HCT116 (cell line): ENCODE measurements at regions of chr17 and their contacts with region 1.

Region 1: GRCh38 chr17:30477083-30477773 is at the start of gene GOSR1:
- DNase-seq: peak; percentile 91
- ATAC-seq: peak; percentile 98
- H3K4me3 ChIP-seq: peak within 1 kb of the TSS; percentile 81 to 87
- H3K27ac ChIP-seq: peak within 1 kb of the TSS; percentile 78
- H3K4me1 ChIP-seq: peaks cover 0 to 12% of the 10 kb centered on the region in 2 experiments; a peak in 3 of 4 replicates
- H3K27me3 ChIP-seq: no peaks in the 10 kb centered on the region
- CTCF ChIP-seq: peak; percentile 68 to 76 (median 71); a peak in 5 of 6 replicates
- POLR2A ChIP-seq: peak; percentile 88
- RAD21 ChIP-seq: peak; percentile 50
- total RNA-seq, gene GOSR1: 48.8 TPM

Region 2: DNA sequence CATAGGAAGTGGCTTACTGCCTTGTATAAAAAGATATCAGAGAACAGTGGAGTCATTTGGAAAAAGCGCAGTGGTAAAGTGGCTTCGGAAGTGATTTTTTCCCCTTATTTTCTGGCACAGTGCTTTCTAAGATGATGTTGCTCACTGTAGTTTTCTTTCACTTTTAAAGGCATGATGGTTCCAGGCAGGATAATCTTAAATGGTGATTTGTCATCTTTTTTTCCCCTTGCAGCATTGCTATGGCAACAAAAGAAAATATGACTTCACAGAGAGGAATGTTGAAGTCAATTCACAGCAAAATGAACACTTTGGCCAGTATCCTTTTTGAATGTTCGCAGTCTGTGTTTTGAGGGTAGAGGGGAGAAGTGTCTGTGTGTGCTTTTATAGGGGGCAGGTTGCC is 42.5 kb after region 1 on chr17:
- CTCF ChIA-PET with region 1: no interaction called
- POLR2A ChIA-PET with region 1: no interaction called
- RAD21 ChIA-PET with region 1: no interaction called
- intact Hi-C with region 1: no loop called
- DNase-seq: no peak
- ATAC-seq: no peak
- H3K4me3 ChIP-seq: no peak overlapping the region
- H3K27ac ChIP-seq: no peak overlapping the region
- H3K4me1 ChIP-seq: no peaks in the 10 kb centered on the region
- H3K27me3 ChIP-seq: no peaks in the 10 kb centered on the region
- CTCF ChIP-seq: no peak
- POLR2A ChIP-seq: no peak
- RAD21 ChIP-seq: no peak

Region 3: DNA sequence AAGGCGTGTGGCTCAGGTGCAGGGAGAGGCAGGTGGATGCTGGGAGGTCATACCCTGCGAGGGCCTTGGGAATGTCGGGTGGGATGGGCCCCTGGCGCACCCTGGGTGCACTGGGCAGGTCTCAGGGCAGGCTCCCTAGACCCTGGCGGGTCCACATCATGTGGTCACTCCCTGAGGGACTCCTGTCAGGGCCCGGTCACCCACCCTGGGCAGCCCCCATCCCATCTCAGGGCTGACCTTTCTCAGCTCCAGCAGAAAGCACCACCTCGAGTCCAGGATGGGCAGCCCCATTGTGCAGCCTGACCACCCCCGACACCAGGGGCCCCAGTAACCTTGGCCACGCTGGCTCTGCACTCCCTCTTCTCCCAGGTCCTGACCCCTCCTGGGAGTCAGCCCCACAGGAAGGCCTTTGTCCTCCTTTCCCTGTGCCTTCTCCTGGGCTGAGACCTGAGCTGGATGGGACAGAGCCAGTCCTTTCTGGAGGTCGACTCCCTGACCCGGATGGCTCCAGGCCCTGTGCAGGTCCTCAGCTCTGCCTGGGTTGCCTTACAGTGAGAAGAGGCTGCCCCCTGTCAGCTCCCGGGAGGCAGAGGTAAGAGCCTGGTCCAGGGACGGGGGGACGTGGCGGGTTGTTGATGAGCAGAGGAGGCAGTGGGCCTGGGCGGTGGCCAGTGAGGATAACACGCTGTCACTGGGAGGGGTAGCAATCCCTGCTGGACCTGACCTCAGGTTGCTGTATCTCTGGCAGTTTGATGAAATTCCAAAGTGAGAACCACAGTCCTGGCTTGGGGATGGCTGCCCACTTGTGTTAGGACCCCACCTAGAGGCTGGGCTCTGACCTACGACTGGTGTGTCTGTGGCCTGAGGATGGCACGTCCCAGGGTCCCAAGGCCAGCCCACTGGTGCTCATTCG is 77.9 kb after region 1 on chr17:
- CTCF ChIA-PET with region 1: no interaction called
- POLR2A ChIA-PET with region 1: no interaction called
- RAD21 ChIA-PET with region 1: no interaction called
- intact Hi-C with region 1: loop called (anchors 2 kb)
- DNase-seq: peak; percentile 10
- ATAC-seq: peak; percentile 78
- H3K4me3 ChIP-seq: no peak overlapping the region
- H3K27ac ChIP-seq: no peak overlapping the region; the same call in 1 of the 2 replicates
- H3K4me1 ChIP-seq: peaks cover 12 to 20% of the 10 kb centered on the region in 2 experiments
- H3K27me3 ChIP-seq: no peaks in the 10 kb centered on the region
- CTCF ChIP-seq: peak; percentile 40 to 76 (median 42); a peak in 5 of 6 replicates
- POLR2A ChIP-seq: no peak
- RAD21 ChIP-seq: peak; percentile 76

Region 4: GRCh38 chr17:30576326-30576861 is 99.2 kb after region 1 on chr17:
- CTCF ChIA-PET with region 1: no interaction called
- POLR2A ChIA-PET with region 1: no interaction called
- RAD21 ChIA-PET with region 1: no interaction called
- intact Hi-C with region 1: no loop called
- DNase-seq: no peak
- ATAC-seq: no peak
- H3K4me3 ChIP-seq: no peak overlapping the region
- H3K27ac ChIP-seq: no peak overlapping the region
- H3K4me1 ChIP-seq: no peaks in the 10 kb centered on the region
- H3K27me3 ChIP-seq: no peaks in the 10 kb centered on the region
- CTCF ChIP-seq: no peak
- POLR2A ChIP-seq: no peak
- RAD21 ChIP-seq: no peak

Region 5: DNA sequence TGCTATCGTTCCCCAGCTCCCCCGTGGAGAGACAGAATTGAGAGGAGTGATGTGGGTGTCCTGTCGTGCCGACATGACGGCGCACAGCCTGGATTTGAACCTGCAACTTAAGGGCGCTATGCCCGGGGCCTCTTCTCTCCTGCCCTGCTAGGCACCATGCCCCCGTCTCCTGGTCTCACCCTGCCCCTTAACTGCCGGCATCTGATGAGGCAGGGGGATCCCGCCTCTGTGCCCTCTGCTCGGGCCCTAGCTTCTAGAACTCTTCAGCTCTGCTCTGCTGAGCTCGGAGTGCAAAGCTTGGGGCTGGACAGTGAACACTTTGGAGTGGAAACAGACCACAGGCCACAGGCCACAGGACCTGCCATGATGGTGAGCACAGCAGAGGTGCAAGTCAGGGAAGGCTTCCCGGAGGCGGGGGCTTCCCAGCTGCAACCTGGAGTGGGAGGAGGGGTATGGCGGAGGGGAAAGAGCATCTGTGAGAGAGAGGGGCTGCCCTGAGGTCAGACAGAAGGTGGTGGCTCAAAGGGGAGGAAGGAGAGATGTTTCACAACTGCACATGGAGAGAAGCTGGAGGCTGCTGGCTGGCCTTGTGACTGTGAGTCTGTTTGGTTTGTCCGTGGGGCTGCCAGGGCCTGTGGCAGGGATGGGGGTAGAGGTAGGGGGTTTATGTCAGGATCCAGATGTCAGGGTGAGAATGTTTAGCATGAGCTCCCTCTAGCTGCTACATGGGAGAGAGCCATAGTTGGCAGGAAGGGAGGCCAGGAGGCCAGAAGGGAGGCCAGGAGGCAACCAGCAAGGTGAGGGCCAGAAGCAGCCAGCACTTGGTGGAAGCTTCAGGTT is 239.5 kb after region 1 on chr17:
- CTCF ChIA-PET with region 1: no interaction called
- POLR2A ChIA-PET with region 1: no interaction called
- RAD21 ChIA-PET with region 1: no interaction called
- intact Hi-C with region 1: loop called (anchors 5 kb)
- DNase-seq: no peak
- ATAC-seq: no peak
- H3K4me3 ChIP-seq: no peak overlapping the region
- H3K27ac ChIP-seq: no peak overlapping the region
- H3K4me1 ChIP-seq: peaks cover 3 to 11% of the 10 kb centered on the region in 2 experiments; a peak in 2 of 4 replicates
- H3K27me3 ChIP-seq: no peaks in the 10 kb centered on the region
- CTCF ChIP-seq: peak in 2 of 3 experiments; percentile 34 to 44; a peak in 2 of 6 replicates
- POLR2A ChIP-seq: no peak
- RAD21 ChIP-seq: peak; percentile 32; the same call in 1 of the 2 replicates